ENCODE measurements at regions of chr4 and their contacts with region 1.

Region 1: DNA sequence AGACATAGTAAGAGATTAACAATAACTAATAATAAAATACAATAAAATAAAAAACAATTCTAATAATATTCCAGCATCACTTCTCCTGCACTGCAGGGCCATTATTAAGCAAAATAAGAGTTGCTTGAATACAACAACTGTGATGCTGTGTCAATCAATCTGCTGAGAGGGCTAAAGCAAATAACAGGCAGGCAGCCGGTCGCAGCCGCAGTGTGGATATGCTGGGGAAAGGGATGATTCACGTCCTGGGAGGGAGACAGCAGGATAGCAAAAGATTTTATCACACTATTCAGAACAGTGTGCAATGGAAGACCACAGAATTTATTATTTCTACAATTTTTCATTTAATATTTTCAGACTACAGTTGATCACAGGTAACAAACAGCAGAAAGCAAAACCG is 76.5 kb upstream of the SMARCAD1 start:
- DNase-seq: no peak
- ATAC-seq: no peak
- H3K4me3 ChIP-seq: no peak overlapping the region
- H3K27ac ChIP-seq: no peak overlapping the region
- H3K4me1 ChIP-seq: no peaks in the 10 kb centered on the region
- H3K27me3 ChIP-seq: no peaks in the 10 kb centered on the region

Region 2: DNA sequence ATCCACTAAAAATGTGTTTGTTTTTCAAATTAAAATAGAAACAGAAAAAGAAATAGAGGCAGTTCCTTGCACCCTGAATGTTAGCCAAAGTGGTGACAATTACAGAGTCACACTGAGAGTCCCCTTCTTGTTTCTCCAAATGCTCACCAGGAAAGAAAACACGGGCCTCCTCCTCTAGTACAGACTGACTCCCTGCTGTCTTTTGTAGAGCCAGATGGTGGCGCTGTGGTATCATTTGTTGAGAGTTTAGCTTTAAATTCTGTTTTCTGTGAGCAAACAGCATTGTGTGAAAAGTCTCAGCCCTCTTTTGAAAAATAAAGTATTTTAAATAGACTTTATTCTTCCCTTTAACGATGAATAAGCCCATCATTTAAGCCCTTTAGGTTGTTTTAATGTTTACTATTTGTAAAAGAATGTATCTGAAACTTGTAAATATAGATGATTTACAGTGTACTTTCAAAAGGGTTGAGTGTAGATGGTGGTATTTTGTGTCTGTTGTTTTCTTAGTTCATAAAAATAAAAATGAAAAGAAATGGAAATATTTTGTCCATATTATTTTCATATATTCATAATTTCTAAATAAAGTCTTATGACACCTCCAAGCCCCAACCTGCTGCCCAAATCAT is 339.5 kb before region 1 on chr4:
- intact Hi-C with region 1: loop called in 1 of 2 experiments (anchors 10 kb)
- DNase-seq: no peak
- ATAC-seq: no peak
- H3K4me3 ChIP-seq: no peak overlapping the region
- H3K27ac ChIP-seq: no peak overlapping the region
- H3K4me1 ChIP-seq: no peaks in the 10 kb centered on the region
- H3K27me3 ChIP-seq: no peaks in the 10 kb centered on the region

Region 3: GRCh38 chr4:94516067-94516466 is 384.9 kb after region 1 on chr4:
- intact Hi-C with region 1: no loop called
- DNase-seq: no peak
- ATAC-seq: peak; percentile 57
- H3K4me3 ChIP-seq: peak overlapping the region in 1 of 2 donors; percentile 10
- H3K27ac ChIP-seq: peak overlapping the region in 1 of 2 donors; percentile 82
- H3K4me1 ChIP-seq: peaks cover 2 to 12% of the 10 kb centered on the region in 2 donors
- H3K27me3 ChIP-seq: no peaks in the 10 kb centered on the region

Measured in aorta (tissue), 5 donors.